ENCODE measurements at regions of chr10 and their contacts with region 1.

Region 1: GRCh38 chr10:26556748-26557640 is 118.9 kb downstream of the APBB1IP start:
- DNase-seq: peak; percentile 52
- H3K4me3 Mint-ChIP-seq: no peak overlapping the region
- H3K27ac Mint-ChIP-seq: no peak overlapping the region
- H3K4me1 Mint-ChIP-seq: peaks cover 3% of the 10 kb centered on the region
- H3K27me3 Mint-ChIP-seq: no peaks in the 10 kb centered on the region

Region 2: DNA sequence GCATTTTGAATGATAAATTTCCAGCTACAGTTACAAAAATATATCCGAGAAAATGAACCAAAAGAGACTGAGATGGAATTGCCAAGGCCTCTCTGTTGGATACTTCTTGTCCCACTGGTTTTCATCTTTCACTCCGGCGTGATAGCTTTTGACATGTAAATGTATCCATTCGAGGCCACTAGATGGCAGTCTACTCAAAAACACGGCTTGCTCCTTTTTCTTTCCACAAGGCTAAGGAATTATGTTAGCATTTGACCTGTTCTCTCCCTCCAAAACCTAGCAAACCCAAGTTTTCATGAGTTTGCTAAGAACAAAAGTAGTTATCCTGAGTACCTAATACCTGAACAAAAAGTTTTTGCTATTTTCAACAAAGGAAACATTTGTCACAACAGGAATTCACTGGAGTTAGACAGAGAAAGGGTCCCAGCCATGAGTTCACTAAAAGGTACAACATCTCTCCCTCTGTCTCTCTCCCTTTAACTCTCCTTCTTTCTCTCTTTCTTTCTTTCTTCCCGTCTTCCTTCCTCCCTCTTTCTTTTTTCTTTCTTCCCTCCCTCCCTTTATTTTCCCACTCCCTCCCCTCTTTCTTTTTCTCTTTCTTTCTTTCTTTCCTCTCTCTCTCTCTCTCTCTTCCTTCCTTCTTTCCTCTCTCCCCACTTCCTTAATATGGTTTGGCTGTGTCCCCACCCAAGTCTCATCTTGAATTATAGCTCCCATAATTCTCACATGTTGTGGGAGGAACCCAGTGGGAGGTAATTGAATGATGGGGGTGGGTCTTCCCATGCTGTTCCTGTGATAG is 830.9 kb before region 1 on chr10:
- CTCF ChIA-PET with region 1: no interaction called
- intact Hi-C with region 1: loop called (anchors 2 kb)
- DNase-seq: peak; percentile 43
- H3K4me3 Mint-ChIP-seq: no peak overlapping the region
- H3K27ac Mint-ChIP-seq: no peak overlapping the region
- H3K4me1 Mint-ChIP-seq: no peaks in the 10 kb centered on the region
- H3K27me3 Mint-ChIP-seq: peaks cover 25% of the 10 kb centered on the region

Region 3: GRCh38 chr10:25758041-25758457 is 798.9 kb before region 1 on chr10:
- CTCF ChIA-PET with region 1: no interaction called
- intact Hi-C with region 1: loop called (anchors 2 kb)
- DNase-seq: peak; percentile 32
- H3K4me3 Mint-ChIP-seq: no peak overlapping the region
- H3K27ac Mint-ChIP-seq: no peak overlapping the region
- H3K4me1 Mint-ChIP-seq: no peaks in the 10 kb centered on the region
- H3K27me3 Mint-ChIP-seq: peaks cover 4% of the 10 kb centered on the region

Region 4: GRCh38 chr10:25875556-25876165 is 681.3 kb before region 1 on chr10:
- CTCF ChIA-PET with region 1: interaction called, 6 read pairs
- intact Hi-C with region 1: loop called (anchors 1 kb)
- DNase-seq: peak; percentile 85
- H3K4me3 Mint-ChIP-seq: no peak overlapping the region
- H3K27ac Mint-ChIP-seq: no peak overlapping the region
- H3K4me1 Mint-ChIP-seq: no peaks in the 10 kb centered on the region
- H3K27me3 Mint-ChIP-seq: peaks cover 4% of the 10 kb centered on the region

Region 5: GRCh38 chr10:26215935-26216584 is 340.9 kb before region 1 on chr10:
- CTCF ChIA-PET with region 1: no interaction called
- intact Hi-C with region 1: loop called (anchors 5 kb)
- DNase-seq: peak; percentile 71
- H3K4me3 Mint-ChIP-seq: peak overlapping the region; percentile 40
- H3K27ac Mint-ChIP-seq: no peak overlapping the region
- H3K4me1 Mint-ChIP-seq: peaks cover 40% of the 10 kb centered on the region
- H3K27me3 Mint-ChIP-seq: peaks cover 85% of the 10 kb centered on the region

Region 6: DNA sequence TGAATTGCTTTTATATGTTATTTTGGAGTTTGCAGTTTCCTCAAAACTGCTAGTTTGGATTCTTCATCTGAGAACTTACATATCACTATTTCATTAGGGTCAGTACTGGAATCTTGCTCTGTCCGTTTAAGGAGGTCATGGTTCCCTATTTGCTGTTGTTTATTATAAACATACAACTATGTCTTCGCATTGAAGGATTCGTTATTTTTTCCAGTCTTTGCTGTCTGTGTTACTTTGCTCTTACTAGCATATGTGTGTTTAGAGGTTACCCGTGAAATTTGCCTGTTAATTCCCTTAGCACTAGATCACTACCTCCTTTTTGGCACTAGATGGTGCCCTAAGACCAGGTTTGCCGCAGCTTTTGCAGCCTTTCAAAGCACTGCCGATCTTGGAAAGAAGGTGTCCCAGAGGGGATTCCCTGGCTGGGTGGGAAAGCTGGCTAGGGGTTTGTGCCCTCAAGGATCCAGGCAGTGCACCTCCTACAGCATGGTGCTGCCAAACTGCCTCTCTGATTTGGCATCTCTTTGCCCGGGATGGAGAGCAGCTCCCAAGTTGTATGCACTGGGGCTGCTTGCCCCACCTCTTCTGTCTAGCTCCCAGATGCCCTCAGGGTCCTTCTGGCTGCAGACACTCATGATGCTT is 221.9 kb before region 1 on chr10:
- CTCF ChIA-PET with region 1: interaction called, 77 read pairs
- intact Hi-C with region 1: loop called (anchors 1 kb)
- DNase-seq: peak; percentile 76
- H3K4me3 Mint-ChIP-seq: peak overlapping the region; percentile 71
- H3K27ac Mint-ChIP-seq: peak overlapping the region; percentile 48
- H3K4me1 Mint-ChIP-seq: peaks cover 8% of the 10 kb centered on the region
- H3K27me3 Mint-ChIP-seq: no peaks in the 10 kb centered on the region

Region 7: DNA sequence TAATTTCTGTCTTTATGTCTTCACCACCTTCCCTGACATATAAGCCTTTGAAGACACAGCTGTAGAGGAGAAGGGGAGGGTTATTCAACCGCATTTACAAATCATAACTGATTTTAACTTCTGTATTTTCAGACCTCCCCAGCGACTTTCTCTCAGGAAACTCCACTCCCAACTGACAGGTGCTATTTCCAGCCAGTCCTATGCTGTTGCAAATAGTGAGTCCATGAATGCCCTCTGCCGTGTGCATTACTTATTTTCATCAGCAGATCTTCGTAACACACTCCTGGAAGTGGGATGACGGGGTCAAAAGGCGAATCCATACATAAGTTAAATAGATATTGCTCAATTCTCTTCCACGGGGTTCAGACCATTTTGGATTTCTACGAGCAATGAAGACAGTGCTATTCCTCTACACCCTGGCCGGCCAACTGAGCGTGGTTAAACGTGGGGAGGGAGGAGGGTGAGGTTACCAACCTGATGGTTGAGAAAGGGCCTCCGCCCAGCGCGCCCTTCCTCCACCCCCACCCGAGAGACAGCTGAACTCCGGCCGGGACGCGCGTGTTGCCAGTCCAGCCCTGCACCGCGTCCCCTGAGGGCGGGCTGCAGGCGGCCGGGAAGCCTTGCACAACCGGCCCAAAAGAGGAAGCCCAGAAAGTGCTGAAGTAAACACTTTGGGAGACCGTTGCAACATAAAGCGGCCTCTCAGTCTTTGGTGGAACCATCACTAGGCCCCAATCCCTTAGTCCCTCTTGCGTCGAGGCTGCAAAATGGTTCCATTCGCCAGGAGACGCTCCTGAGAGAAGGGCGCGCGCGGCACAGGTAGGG is 119.1 kb before region 1 on chr10 and contains the start of gene APBB1IP:
- CTCF ChIA-PET with region 1: interaction called, 3 read pairs
- intact Hi-C with region 1: loop called (anchors 2 kb)
- DNase-seq: peak; percentile 58
- H3K4me3 Mint-ChIP-seq: peak within 1 kb of the TSS; percentile 81
- H3K27ac Mint-ChIP-seq: peak within 1 kb of the TSS; percentile 98
- H3K4me1 Mint-ChIP-seq: peaks cover 50% of the 10 kb centered on the region
- H3K27me3 Mint-ChIP-seq: no peaks in the 10 kb centered on the region
- total RNA-seq, gene APBB1IP: 29.4 to 30.9 TPM

Region 8: GRCh38 chr10:26733750-26734568 is 177.0 kb after region 1 on chr10:
- CTCF ChIA-PET with region 1: no interaction called
- intact Hi-C with region 1: no loop called
- DNase-seq: no peak
- H3K4me3 Mint-ChIP-seq: no peak overlapping the region
- H3K27ac Mint-ChIP-seq: no peak overlapping the region
- H3K4me1 Mint-ChIP-seq: peaks cover 26% of the 10 kb centered on the region
- H3K27me3 Mint-ChIP-seq: no peaks in the 10 kb centered on the region

Measured in activated naive CD4-positive, alpha-beta T cell treated with anti-CD3 and anti-CD28 coated beads for 36 hours (primary cell).